GM12878 (cell line): ENCODE measurements at regions of chr10 and their contacts with region 1.

Region 1: GRCh38 chr10:101214446-101215396 is 14.5 kb downstream of the LBX1 start:
- DNase-seq: no peak
- ATAC-seq: peak; percentile 94
- H3K4me3 ChIP-seq: no peak overlapping the region
- H3K27ac ChIP-seq: no peak overlapping the region
- H3K4me1 ChIP-seq: no peaks in the 10 kb centered on the region; the same call in 1 of the 2 replicates
- H3K27me3 ChIP-seq: peaks cover 15 to 22% of the 10 kb centered on the region in 2 experiments
- CTCF ChIP-seq: peak; percentile 76 to 91 (median 78)
- EP300 ChIP-seq: no peak
- POLR2A ChIP-seq: no peak
- RAD21 ChIP-seq: peak; percentile 71

Region 2: DNA sequence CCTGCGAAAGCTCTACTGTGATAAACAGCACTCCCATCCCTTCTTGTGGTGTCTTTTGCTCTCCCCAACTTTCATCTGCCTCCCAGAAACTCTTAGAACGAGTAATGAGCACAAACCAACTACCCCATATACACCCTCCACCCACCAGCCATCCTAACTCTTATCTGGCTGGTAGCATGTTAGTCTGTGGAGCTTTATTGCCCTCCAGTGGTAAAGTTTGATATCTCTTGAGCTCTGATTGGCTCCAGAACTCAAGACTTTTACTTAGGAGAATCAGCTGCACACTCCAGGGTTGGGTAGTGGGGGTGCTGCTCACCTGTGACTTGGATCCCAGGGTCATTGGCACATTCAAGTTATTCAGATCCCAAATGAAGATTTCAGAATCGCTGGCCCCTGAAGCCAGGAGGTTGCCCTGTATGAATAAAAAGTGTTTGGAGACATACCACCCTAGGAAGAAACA is 706.0 kb before region 1 on chr10:
- CTCF ChIA-PET with region 1: no interaction called
- POLR2A ChIA-PET with region 1: no interaction called
- RAD21 ChIA-PET with region 1: no interaction called
- SMC1A ChIA-PET with region 1: no interaction called
- in situ Hi-C with region 1: no loop called
- intact Hi-C with region 1: no loop called
- DNase-seq: no peak
- ATAC-seq: peak; percentile 94
- H3K4me3 ChIP-seq: no peak overlapping the region
- H3K27ac ChIP-seq: no peak overlapping the region
- H3K4me1 ChIP-seq: peaks cover 8% of the 10 kb centered on the region; the same call in 1 of the 2 replicates
- H3K27me3 ChIP-seq: no peaks in the 10 kb centered on the region
- CTCF ChIP-seq: peak; percentile 34 to 64 (median 51)
- EP300 ChIP-seq: no peak
- POLR2A ChIP-seq: no peak
- RAD21 ChIP-seq: peak; percentile 62

Region 3: DNA sequence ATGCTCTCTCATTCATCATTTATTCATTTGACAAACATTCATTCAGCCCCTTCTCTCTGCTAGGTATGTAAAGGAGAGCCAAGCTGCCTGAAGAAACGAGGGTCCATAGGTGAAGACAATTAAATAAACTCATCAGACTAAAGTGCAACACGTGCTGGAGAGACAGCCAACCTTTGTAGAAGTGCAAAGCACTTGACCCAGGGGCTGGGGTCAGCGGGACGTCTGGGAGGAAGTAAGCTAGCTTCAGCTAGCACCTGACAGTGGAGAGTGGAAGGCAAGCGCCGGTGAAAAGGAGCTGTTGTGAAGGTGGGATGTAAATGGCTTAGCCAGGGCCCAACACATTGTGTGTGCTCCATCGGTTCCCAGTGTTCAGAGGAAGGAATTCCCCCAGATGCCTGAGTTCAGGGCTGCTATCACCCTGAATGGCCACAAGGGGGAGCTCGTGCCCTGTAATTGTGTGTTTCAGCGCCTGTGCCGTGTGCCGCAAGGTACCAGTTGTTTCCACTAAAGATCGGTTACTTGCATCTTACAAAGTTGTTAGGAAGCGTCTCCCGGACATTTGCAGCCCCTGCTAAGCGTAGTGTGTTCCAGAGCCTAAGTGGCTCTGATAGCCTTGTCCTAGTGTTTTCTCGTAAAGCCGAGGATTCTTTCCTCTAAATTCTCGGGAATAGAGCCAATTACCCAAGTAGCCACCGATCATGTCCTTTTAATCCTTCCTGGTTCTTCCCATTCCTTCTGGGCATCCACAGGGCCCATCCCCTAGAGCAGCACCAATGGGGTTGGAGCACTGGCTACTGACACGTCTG is 53.0 kb before region 1 on chr10:
- CTCF ChIA-PET with region 1: interaction called, 9 read pairs
- POLR2A ChIA-PET with region 1: no interaction called
- RAD21 ChIA-PET with region 1: no interaction called
- SMC1A ChIA-PET with region 1: no interaction called
- in situ Hi-C with region 1: no loop called
- intact Hi-C with region 1: loop called (anchors 5 kb)
- DNase-seq: peak; percentile 12
- ATAC-seq: peak; percentile 96
- H3K4me3 ChIP-seq: no peak overlapping the region
- H3K27ac ChIP-seq: no peak overlapping the region
- H3K4me1 ChIP-seq: peaks cover 6% of the 10 kb centered on the region
- H3K27me3 ChIP-seq: peaks cover 1 to 2% of the 10 kb centered on the region in 2 experiments; a peak in 3 of 4 replicates
- CTCF ChIP-seq: peak; percentile 94 to 97 (median 95); a peak in 5 of 6 replicates
- EP300 ChIP-seq: no peak
- POLR2A ChIP-seq: no peak
- RAD21 ChIP-seq: peak; percentile 70

Region 4: DNA sequence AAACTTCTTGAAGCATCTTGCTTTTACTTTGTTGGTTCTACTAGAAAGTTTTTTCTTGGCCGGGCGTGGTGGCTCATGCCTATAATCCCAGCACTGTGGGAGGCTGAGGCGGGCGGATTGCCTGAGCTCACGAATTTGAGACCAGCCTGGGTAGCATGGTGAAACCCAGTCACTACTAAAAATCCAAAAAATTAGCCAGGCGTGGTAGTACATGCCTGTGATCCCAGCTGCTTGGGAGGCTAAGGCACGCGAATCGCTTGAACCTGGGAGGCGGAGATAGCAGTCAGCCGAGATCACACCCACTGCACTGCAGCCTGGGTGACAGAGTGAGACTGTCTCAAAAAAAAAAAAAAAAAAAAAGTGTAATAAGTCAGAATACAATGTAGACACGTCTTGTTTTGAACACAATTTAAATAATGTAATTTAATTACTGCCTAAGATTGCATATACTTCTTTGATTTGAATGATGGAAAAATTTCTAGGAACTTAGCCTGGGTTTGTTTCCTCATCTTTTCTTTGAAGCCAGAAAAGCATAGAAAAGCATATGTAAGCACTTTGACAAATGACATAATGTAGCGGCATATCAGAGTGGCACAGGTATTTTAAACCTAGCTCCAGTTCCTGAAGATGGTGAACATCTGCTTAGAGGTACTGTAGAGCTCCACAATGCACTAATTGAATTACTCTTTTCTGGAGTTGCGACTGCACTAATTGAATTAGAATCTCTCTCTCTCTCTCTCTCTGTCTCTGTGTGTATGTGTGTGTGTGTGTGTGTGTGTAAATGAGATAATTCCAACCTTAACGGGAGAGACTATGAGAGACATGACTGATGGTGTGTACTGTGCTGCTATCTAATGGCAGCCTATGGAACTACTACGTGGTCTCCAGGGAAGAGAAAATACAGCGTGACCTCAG is 227.1 kb after region 1 on chr10:
- CTCF ChIA-PET with region 1: interaction called, 20 read pairs
- POLR2A ChIA-PET with region 1: no interaction called
- RAD21 ChIA-PET with region 1: interaction called, 13 read pairs
- SMC1A ChIA-PET with region 1: interaction called, 10 read pairs
- in situ Hi-C with region 1: no loop called
- intact Hi-C with region 1: loop called (anchors 5 kb)
- DNase-seq: no peak
- ATAC-seq: peak; percentile 94
- H3K4me3 ChIP-seq: no peak overlapping the region
- H3K27ac ChIP-seq: no peak overlapping the region
- H3K4me1 ChIP-seq: no peaks in the 10 kb centered on the region
- H3K27me3 ChIP-seq: no peaks in the 10 kb centered on the region
- CTCF ChIP-seq: peak; percentile 67 to 75 (median 67)
- EP300 ChIP-seq: no peak
- POLR2A ChIP-seq: no peak
- RAD21 ChIP-seq: peak; percentile 81

Region 5: GRCh38 chr10:101467286-101467770 is 252.6 kb after region 1 on chr10:
- CTCF ChIA-PET with region 1: interaction called, 49 read pairs
- POLR2A ChIA-PET with region 1: no interaction called
- RAD21 ChIA-PET with region 1: interaction called, 24 read pairs
- SMC1A ChIA-PET with region 1: interaction called, 21 read pairs
- in situ Hi-C with region 1: loop called (anchors 10 kb)
- intact Hi-C with region 1: loop called (anchors 1 kb)
- DNase-seq: peak; percentile 23
- ATAC-seq: peak; percentile 96
- H3K4me3 ChIP-seq: no peak overlapping the region
- H3K27ac ChIP-seq: no peak overlapping the region
- H3K4me1 ChIP-seq: no peaks in the 10 kb centered on the region
- H3K27me3 ChIP-seq: no peaks in the 10 kb centered on the region
- CTCF ChIP-seq: peak; percentile 81 to 91 (median 81)
- EP300 ChIP-seq: no peak
- POLR2A ChIP-seq: no peak
- RAD21 ChIP-seq: peak; percentile 66

Region 6: GRCh38 chr10:102072673-102073527 is 858.2 kb after region 1 on chr10:
- CTCF ChIA-PET with region 1: no interaction called
- POLR2A ChIA-PET with region 1: no interaction called
- RAD21 ChIA-PET with region 1: no interaction called
- SMC1A ChIA-PET with region 1: no interaction called
- in situ Hi-C with region 1: loop called (anchors 25 kb)
- intact Hi-C with region 1: loop called (anchors 10 kb)
- DNase-seq: no peak
- ATAC-seq: peak; percentile 99
- H3K4me3 ChIP-seq: no peak overlapping the region
- H3K27ac ChIP-seq: no peak overlapping the region
- H3K4me1 ChIP-seq: no peaks in the 10 kb centered on the region
- H3K27me3 ChIP-seq: no peaks in the 10 kb centered on the region
- CTCF ChIP-seq: peak; percentile 94 to 96 (median 95)
- EP300 ChIP-seq: no peak
- POLR2A ChIP-seq: no peak
- RAD21 ChIP-seq: peak; percentile 92